Posterior cingulate gyrus (tissue), 11 donors: ENCODE measurements at regions of chr2 and their contacts with region 1.

Region 1: GRCh38 chr2:64767670-64768468 is 114.2 kb upstream of the SERTAD2 start:
- DNase-seq: peak; percentile 74 to 97 (median 85)

Region 2: DNA sequence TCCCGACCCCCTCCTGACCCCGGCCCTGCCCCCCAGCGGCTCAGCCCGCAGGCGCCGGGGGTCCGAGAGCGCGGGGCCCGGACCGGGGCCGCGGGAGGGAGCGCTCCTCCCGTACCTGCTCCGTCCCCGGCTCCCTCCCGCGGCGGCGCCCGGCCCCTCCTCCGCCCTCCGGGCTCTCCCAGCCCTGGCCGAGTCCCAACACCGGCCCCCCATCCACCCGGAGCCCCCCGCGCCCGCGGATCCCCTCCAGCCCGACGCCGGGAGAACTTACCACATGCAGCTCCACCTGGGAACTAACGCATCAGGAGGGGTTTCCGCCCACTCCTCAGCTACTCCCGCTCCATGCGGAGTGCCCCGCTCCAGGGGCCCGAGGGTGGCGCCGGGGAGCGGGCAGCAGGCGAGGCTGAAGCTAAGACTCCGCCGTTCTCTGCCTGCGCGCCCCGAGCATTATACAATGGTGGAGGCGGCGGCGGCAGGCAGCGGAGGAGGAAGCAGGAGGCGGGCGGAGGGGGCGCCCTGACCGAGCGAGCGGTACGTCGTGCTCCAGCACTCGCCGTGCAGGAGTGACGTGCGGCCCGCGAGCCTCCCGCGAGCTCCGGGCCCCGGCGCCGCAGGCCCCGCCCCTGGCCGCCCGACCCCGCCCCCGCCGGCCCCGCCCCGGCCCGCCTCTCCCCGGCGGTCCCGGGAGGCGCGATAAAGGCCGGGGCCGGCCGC is 114.4 kb before region 1 on chr2 and contains the start of gene SERTAD2:
- intact Hi-C with region 1: loop called (anchors 5 kb)
- DNase-seq: peak; percentile 69 to 98 (median 81)

Region 3: GRCh38 chr2:64825831-64826491 is 58.1 kb after region 1 on chr2:
- intact Hi-C with region 1: loop called (anchors 5 kb)
- DNase-seq: no peak